ENCODE measurements at regions of chr12 and their contacts with region 1.

Region 1: GRCh38 chr12:57751788-57752667 is at the start of gene CDK4:
- DNase-seq: peak; percentile 94
- ATAC-seq: peak; percentile 76
- H3K4me3 Mint-ChIP-seq: peak within 1 kb of the TSS; percentile 90
- H3K27ac Mint-ChIP-seq: peak within 1 kb of the TSS; percentile 87
- H3K4me1 Mint-ChIP-seq: peaks cover 55% of the 10 kb centered on the region
- H3K27me3 Mint-ChIP-seq: no peaks in the 10 kb centered on the region
- CTCF ChIP-seq: no peak
- total RNA-seq, gene CDK4: 95.7 and 95.9 TPM in 2 replicates

Region 2: GRCh38 chr12:56688129-56688845 is 1063.7 kb before region 1 on chr12 and contains the start of gene PTGES3:
- CTCF ChIA-PET with region 1: no interaction called
- POLR2A ChIA-PET with region 1: interaction called, 3 read pairs
- intact Hi-C with region 1: loop called (anchors 5 kb)
- DNase-seq: peak; percentile 97
- ATAC-seq: peak; percentile 75
- H3K4me3 Mint-ChIP-seq: peak within 1 kb of the TSS; percentile 100
- H3K27ac Mint-ChIP-seq: peak within 1 kb of the TSS; percentile 99
- H3K4me1 Mint-ChIP-seq: peaks cover 36% of the 10 kb centered on the region
- H3K27me3 Mint-ChIP-seq: no peaks in the 10 kb centered on the region
- CTCF ChIP-seq: no peak
- total RNA-seq, gene PTGES3: 183 and 185 TPM in 2 replicates

Region 3: GRCh38 chr12:57590536-57591479 is 161.2 kb before region 1 on chr12 and contains the start of gene PIP4K2C:
- CTCF ChIA-PET with region 1: no interaction called
- POLR2A ChIA-PET with region 1: no interaction called
- intact Hi-C with region 1: no loop called
- DNase-seq: peak; percentile 79
- ATAC-seq: peak; percentile 96
- H3K4me3 Mint-ChIP-seq: peak within 1 kb of the TSS; percentile 88
- H3K27ac Mint-ChIP-seq: peak within 1 kb of the TSS; percentile 68
- H3K4me1 Mint-ChIP-seq: peaks cover 19% of the 10 kb centered on the region
- H3K27me3 Mint-ChIP-seq: no peaks in the 10 kb centered on the region
- CTCF ChIP-seq: no peak
- total RNA-seq, gene PIP4K2C: 16.5 and 17.9 TPM in 2 replicates

Region 4: DNA sequence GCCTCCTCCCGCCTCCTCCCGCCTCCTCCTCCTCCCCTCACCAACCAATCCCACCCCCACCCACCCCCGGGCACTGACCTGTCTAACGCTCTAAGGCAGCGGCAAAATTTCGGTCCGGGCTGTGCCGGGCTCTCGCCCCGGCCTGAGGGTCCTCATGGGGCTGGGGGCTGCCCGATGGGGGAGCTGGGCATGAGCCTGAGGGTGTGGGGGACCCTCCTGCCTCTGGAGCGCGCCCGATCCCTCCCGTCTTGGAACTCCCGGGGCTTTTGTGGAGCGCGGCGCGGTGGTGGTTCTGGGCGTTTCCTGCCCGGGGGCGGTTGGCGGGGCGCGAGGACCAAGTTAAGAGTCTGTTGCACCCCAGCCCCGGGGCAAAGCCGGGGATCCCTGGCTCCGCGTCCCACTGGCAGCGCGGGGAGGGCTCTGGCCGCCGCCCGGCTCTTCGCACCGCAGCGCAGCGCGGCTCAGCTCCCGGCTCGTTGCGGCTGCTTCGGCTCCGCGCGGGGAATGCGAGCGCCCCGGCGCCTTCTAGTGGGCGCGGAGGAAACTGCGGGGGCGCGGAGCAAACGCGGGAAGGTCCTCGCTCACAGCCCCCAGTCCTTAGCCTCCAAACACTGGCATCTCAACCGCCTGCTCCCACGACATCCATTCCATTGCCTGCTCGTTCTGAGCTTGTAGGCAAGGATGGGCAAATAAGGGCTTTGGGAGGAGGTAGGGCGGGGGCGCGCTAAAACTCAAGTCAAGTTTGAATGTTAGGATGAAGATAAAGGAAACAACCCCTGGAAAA is 119.1 kb before region 1 on chr12 and contains the start of gene B4GALNT1:
- CTCF ChIA-PET with region 1: no interaction called
- POLR2A ChIA-PET with region 1: no interaction called
- intact Hi-C with region 1: no loop called
- DNase-seq: peak; percentile 75
- ATAC-seq: peak; percentile 94
- H3K4me3 Mint-ChIP-seq: peak within 1 kb of the TSS; percentile 73
- H3K27ac Mint-ChIP-seq: no peak within 1 kb of the TSS
- H3K4me1 Mint-ChIP-seq: peaks cover 12% of the 10 kb centered on the region
- H3K27me3 Mint-ChIP-seq: peaks cover 46% of the 10 kb centered on the region
- CTCF ChIP-seq: peak; percentile 27
- total RNA-seq, gene B4GALNT1: 0.31 and 0.51 TPM in 2 replicates

Region 5: GRCh38 chr12:57693659-57694458 is 58.2 kb before region 1 on chr12 and contains the start of gene OS9:
- CTCF ChIA-PET with region 1: interaction called, 3 read pairs
- POLR2A ChIA-PET with region 1: interaction called, 6 read pairs
- intact Hi-C with region 1: loop called (anchors 1 kb)
- DNase-seq: peak; percentile 73
- ATAC-seq: peak; percentile 91
- H3K4me3 Mint-ChIP-seq: no peak within 1 kb of the TSS
- H3K27ac Mint-ChIP-seq: no peak within 1 kb of the TSS
- H3K4me1 Mint-ChIP-seq: peaks cover 2% of the 10 kb centered on the region
- H3K27me3 Mint-ChIP-seq: peaks cover 8% of the 10 kb centered on the region
- CTCF ChIP-seq: no peak
- total RNA-seq, gene OS9: 166 TPM in 2 replicates

Region 6: GRCh38 chr12:57771708-57772428 is 19.8 kb after region 1 on chr12 and contains the start of gene METTL1:
- CTCF ChIA-PET with region 1: interaction called, 20 read pairs
- POLR2A ChIA-PET with region 1: interaction called, 34 read pairs
- intact Hi-C with region 1: loop called (anchors 1 kb)
- DNase-seq: peak; percentile 81
- ATAC-seq: peak; percentile 91
- H3K4me3 Mint-ChIP-seq: peak within 1 kb of the TSS; percentile 98
- H3K27ac Mint-ChIP-seq: peak within 1 kb of the TSS; percentile 98
- H3K4me1 Mint-ChIP-seq: peaks cover 20% of the 10 kb centered on the region
- H3K27me3 Mint-ChIP-seq: peaks cover under 1% of the 10 kb centered on the region
- CTCF ChIP-seq: no peak
- total RNA-seq, gene METTL1: 32.2 and 40.7 TPM in 2 replicates

Region 7: GRCh38 chr12:57846577-57847319 is 94.7 kb after region 1 on chr12 and contains the start of gene CTDSP2:
- CTCF ChIA-PET with region 1: interaction called, 3 read pairs
- POLR2A ChIA-PET with region 1: interaction called, 4 read pairs
- intact Hi-C with region 1: loop called (anchors 2 kb)
- DNase-seq: peak; percentile 81
- ATAC-seq: peak; percentile 47
- H3K4me3 Mint-ChIP-seq: peak within 1 kb of the TSS; percentile 86
- H3K27ac Mint-ChIP-seq: peak within 1 kb of the TSS; percentile 85
- H3K4me1 Mint-ChIP-seq: peaks cover 45% of the 10 kb centered on the region
- H3K27me3 Mint-ChIP-seq: peaks cover 8% of the 10 kb centered on the region
- CTCF ChIP-seq: no peak
- total RNA-seq, gene CTDSP2: 73.2 and 81.5 TPM in 2 replicates

Region 8: GRCh38 chr12:57904848-57905811 is 153.1 kb after region 1 on chr12:
- CTCF ChIA-PET with region 1: interaction called, 6 read pairs
- POLR2A ChIA-PET with region 1: no interaction called
- intact Hi-C with region 1: loop called (anchors 1 kb)
- DNase-seq: peak; percentile 76
- ATAC-seq: peak; percentile 100
- H3K4me3 Mint-ChIP-seq: peak overlapping the region; percentile 66
- H3K27ac Mint-ChIP-seq: no peak overlapping the region
- H3K4me1 Mint-ChIP-seq: peaks cover 13% of the 10 kb centered on the region
- H3K27me3 Mint-ChIP-seq: peaks cover 5% of the 10 kb centered on the region
- CTCF ChIP-seq: peak; percentile 88